Activated T-helper 2 cell treated with anti-CD3 and anti-CD28 coated beads, Interferon-gamma antibody, Interleukin-2, Interleukin-4, amounts not matched to agents 10 μg/mL and 5 μg/mL and 100 μg/mL, durations not matched to agents 14 hours and 24 hours and 36 hours (primary cell): ENCODE measurements at regions of chr1 and their contacts with region 1.

Region 1: GRCh38 chr1:31769720-31770390 is 5.7 kb upstream of the ADGRB2 start:
- DNase-seq: no peak
- H3K4me3 Mint-ChIP-seq: no peak overlapping the region
- H3K27ac Mint-ChIP-seq: peak overlapping the region; percentile 74
- H3K4me1 Mint-ChIP-seq: peaks cover 58% of the 10 kb centered on the region
- H3K27me3 Mint-ChIP-seq: peaks cover 44% of the 10 kb centered on the region

Region 2: DNA sequence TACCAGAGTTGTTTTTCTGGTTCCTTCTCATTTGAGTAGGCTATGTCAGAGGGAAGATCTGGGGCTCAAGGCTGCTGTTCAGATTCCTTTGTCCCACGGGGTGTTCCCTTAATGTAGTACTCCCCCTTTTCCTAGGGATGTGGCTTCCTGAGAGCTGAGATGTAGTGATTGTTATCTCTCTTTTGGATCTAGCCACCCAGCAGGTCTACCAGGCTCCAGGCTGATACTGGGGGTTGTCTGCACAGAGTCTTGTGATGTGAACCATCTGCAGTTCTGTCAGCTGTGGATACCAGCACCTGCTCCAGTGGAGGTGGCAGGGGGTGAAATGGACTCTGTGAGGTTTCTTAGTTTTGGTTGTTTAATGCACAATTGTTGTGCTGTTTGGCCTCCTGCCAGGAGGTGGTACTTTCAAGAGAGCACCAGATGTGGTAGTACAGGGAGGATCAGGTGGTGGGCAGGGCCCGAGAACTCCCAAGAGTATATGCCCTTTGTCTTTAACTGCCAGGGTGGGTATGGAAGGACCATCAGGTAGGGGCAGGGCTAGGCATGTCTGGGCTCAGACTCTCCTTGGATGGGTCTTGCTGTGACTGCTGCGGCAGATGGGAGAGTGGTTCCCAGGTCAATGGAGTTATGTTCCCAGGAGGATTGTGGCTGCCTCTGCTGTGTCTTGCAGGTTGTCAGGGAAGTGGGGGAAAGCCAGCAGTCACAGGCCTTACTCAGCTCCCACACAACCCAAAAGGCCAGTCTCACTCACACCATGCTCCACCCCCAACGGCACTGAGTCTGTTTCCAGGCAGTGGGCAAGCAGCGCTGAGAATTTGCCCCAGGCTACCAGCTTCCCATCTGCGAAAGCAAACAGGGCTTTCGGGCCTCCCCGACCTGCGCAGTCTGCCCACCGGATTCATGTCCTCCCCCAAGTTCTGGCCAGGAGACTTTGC is 292.7 kb before region 1 on chr1:
- intact Hi-C with region 1: no loop called
- DNase-seq: no peak
- H3K4me3 Mint-ChIP-seq: no peak overlapping the region
- H3K27ac Mint-ChIP-seq: no peak overlapping the region
- H3K4me1 Mint-ChIP-seq: peaks cover 4% of the 10 kb centered on the region
- H3K27me3 Mint-ChIP-seq: peaks cover 14% of the 10 kb centered on the region

Region 3: GRCh38 chr1:31705080-31705866 is 64.6 kb before region 1 on chr1:
- intact Hi-C with region 1: loop called (anchors 1 kb)
- DNase-seq: peak; percentile 49
- H3K4me3 Mint-ChIP-seq: no peak overlapping the region
- H3K27ac Mint-ChIP-seq: no peak overlapping the region
- H3K4me1 Mint-ChIP-seq: peaks cover 29% of the 10 kb centered on the region
- H3K27me3 Mint-ChIP-seq: peaks cover 20% of the 10 kb centered on the region

Region 4: DNA sequence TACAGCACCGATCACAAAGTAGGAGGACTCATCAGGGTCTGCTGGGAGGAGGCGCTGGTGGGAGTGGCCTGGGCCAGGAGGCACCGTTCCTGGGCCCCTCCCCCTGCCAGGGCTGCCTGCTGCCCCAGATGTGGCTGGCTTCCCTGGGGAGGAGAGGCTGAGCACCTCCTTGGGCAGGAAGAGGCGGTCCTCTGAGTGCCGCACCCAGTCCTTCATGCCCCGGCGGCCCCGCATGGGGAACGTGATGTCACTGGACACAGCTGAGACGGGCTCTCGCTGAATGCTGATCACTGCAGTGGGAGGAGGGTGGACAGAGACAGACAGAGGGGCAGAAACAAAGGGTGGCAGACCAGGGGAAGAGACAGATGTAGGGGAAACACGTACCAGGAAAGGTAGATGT is 30.5 kb before region 1 on chr1:
- intact Hi-C with region 1: no loop called
- DNase-seq: peak; percentile 53
- H3K4me3 Mint-ChIP-seq: no peak overlapping the region
- H3K27ac Mint-ChIP-seq: no peak overlapping the region
- H3K4me1 Mint-ChIP-seq: peaks cover 5% of the 10 kb centered on the region
- H3K27me3 Mint-ChIP-seq: no peaks in the 10 kb centered on the region

Region 5: GRCh38 chr1:31891280-31891679 is 121.4 kb after region 1 on chr1:
- intact Hi-C with region 1: loop called (anchors 1 kb)
- DNase-seq: peak; percentile 21
- H3K4me3 Mint-ChIP-seq: no peak overlapping the region
- H3K27ac Mint-ChIP-seq: peak overlapping the region; percentile 52
- H3K4me1 Mint-ChIP-seq: peaks cover 32% of the 10 kb centered on the region
- H3K27me3 Mint-ChIP-seq: no peaks in the 10 kb centered on the region

Region 6: DNA sequence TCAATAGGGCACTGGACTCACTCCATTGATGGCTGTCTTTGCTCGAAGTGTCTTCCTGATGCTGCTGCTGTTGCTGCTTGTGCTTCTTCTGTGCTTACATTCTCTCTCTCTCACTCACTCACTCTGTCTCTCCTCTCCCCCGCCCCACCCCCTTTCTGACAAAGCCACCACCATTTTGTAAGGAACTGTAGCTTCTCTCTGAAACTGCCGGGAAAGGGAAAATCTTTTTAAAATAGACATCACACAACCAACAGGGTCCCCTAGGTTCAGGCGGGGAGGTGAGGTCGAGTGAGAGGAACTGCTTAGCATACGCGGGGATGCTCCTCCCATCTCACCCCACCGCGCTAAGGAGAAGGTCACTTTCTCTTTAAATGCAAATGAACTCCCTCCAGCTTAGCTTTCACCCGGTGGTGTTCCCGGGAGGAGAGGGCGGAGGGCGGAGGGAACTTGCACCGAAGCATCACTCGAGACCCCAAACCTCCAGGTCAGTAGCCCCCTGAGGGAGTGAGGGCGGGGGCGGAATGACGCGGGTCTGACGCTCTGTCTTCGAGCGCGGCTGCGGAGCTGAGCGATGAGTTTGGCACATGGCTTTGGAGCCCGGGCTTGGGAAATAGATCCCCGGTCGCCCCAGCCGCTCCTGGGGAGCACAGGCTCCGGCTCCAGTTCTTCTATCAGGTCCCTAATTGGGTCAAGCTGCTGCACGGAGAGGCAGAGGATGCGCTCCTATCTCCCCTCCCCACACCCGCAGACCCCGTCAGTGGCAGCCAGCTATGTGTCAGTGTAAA is 430.6 kb after region 1 on chr1 and contains the start of gene CCDC28B:
- intact Hi-C with region 1: no loop called
- DNase-seq: peak; percentile 49
- H3K4me3 Mint-ChIP-seq: peak within 1 kb of the TSS; percentile 80
- H3K27ac Mint-ChIP-seq: peak within 1 kb of the TSS; percentile 93
- H3K4me1 Mint-ChIP-seq: peaks cover 57% of the 10 kb centered on the region
- H3K27me3 Mint-ChIP-seq: no peaks in the 10 kb centered on the region
- total RNA-seq, gene CCDC28B: 39.1 and 44.0 TPM in 2 replicates